GM18951 (cell line): ENCODE measurements at regions of chr1 and their contacts with region 1.

Region 1: GRCh38 chr1:116168277-116169097 is 57.3 kb downstream of the MAB21L3 start:
- POLR2A ChIP-seq: no peak

Region 2: GRCh38 chr1:116390195-116390594 is 221.7 kb after region 1 on chr1:
- in situ Hi-C with region 1: no loop called
- POLR2A ChIP-seq: no peak

Region 3: DNA sequence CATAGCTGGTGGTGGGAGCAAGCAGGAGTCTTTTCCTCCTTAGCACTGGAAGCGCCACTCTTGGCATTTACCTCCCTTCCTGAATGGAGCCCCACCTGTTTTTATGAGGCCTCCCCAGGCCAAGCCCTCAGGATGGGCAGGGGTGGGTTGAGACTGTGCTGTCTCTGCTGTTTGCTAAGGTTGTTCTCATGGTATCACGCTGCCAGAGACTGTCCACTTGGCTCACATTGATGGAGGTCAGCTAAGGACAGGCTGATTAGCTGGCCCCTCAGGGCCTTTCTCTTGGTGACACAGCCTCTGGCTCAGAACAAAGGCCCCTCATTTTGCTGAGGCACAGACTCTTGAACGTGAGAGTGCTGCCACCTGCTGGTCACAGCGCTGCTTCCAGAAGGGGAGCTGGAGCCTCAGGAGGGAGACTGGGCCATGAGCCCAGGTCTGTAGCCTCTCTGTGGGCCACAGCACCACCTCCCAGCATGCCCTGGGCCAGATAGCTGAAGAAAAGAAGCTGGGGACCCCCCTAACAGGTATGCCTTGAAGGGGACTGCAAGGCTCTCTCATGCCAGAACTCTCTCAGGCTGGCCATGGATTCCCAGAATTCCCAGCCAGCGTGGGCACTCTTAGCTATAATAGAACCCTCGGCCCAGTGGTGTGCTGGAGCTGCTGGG is 316.7 kb after region 1 on chr1:
- in situ Hi-C with region 1: loop called (anchors 10 kb)
- POLR2A ChIP-seq: no peak